SK-N-SH (cell line): ENCODE measurements at regions of chr17 and their contacts with region 1.

Region 1: GRCh38 chr17:27805520-27806146 is 5.3 kb upstream of the NOS2 start:
- DNase-seq: peak; percentile 82
- H3K4me3 ChIP-seq: peak overlapping the region; percentile 3 to 32; a peak in 3 of 4 replicates
- H3K27ac ChIP-seq: no peak overlapping the region
- H3K4me1 ChIP-seq: peaks cover 0 to 9% of the 10 kb centered on the region in 2 experiments; a peak in 1 of 4 replicates
- H3K27me3 ChIP-seq: no peaks in the 10 kb centered on the region
- CTCF ChIP-seq: peak; percentile 78
- EP300 ChIP-seq: no peak
- RAD21 ChIP-seq: peak; percentile 87

Region 2: DNA sequence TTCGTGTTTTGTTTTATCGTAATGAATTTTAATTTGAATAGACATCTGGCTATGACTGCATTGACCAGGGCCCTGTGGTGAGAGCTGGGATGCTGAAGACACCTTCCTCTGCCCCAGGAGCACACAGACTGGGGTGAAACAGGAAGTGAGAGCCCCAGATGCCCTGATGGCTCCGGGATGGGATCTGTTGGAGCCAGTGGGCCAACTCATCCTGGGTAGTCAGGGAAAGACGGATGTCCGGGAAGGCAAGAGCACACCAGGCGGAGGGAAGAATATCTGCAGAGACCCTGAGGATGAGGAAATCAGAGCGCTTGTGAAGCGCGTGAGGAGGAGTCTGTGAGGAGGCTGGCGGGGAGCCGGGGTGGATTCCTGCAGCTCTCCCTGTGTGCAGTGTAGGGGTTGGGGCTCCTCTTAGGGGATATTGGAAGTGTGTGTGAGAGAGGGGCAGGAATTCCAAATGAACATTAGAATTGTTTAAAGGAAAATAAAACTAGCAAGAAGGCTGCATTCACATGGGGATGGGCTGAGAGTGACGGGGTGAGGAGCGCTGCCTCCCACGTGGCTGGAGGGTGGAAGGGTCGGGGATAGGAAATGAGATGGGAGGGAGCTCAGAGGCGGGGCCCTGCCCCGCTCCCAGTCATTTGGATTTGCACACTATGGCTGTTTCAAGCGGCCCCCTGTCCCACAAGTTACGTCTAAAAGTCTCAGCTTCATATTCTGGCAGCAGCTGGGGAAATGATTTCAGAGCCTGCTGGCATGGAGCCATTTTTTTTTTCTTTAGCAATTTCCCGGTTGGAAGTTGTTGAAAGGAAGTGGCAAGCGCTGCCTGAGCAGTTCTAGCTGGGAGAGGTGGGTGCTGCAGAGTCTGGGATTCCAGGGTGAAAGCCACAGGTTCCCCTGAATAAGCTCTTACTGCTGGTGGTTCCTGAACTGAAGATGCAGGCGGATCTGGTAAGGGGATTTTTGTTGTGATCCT is 245.8 kb before region 1 on chr17:
- CTCF ChIA-PET with region 1: no interaction called
- POLR2A ChIA-PET with region 1: no interaction called
- DNase-seq: peak; percentile 58
- H3K4me3 ChIP-seq: 0 out of 4 replicates have a peak overlapping the region, but pooled peaks of 1 of the 2 experiments have one; percentile 1
- H3K27ac ChIP-seq: peak overlapping the region; percentile 56 to 72
- H3K4me1 ChIP-seq: peaks cover 24 to 28% of the 10 kb centered on the region in 2 experiments
- H3K27me3 ChIP-seq: no peaks in the 10 kb centered on the region
- CTCF ChIP-seq: no peak
- EP300 ChIP-seq: peak in 1 of 2 experiments; percentile 45; a peak in 1 of 4 replicates
- RAD21 ChIP-seq: no peak

Region 3: DNA sequence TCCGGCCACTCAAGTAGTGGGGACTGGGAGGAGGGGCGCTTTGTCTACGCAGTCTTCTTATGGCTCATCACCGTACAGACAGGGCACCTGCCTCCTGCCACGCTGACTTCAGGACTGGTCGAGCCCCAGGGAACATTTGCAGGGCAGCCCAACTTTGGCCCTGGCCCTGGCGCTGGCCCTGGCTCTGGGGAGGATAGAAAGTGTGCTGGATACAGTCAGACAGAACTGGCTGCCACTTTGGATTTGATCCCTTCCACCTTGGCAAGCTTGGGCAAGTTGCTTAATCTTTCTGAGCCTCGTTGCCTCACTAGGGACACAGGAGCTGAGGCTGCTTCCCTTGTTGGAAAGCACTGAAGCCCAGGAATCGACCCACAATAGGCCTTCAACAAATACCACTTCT is 161.0 kb before region 1 on chr17:
- CTCF ChIA-PET with region 1: no interaction called
- POLR2A ChIA-PET with region 1: no interaction called
- DNase-seq: no peak
- H3K4me3 ChIP-seq: no peak overlapping the region
- H3K27ac ChIP-seq: no peak overlapping the region
- H3K4me1 ChIP-seq: no peaks in the 10 kb centered on the region
- H3K27me3 ChIP-seq: no peaks in the 10 kb centered on the region
- CTCF ChIP-seq: no peak
- EP300 ChIP-seq: no peak
- RAD21 ChIP-seq: no peak

Region 4: DNA sequence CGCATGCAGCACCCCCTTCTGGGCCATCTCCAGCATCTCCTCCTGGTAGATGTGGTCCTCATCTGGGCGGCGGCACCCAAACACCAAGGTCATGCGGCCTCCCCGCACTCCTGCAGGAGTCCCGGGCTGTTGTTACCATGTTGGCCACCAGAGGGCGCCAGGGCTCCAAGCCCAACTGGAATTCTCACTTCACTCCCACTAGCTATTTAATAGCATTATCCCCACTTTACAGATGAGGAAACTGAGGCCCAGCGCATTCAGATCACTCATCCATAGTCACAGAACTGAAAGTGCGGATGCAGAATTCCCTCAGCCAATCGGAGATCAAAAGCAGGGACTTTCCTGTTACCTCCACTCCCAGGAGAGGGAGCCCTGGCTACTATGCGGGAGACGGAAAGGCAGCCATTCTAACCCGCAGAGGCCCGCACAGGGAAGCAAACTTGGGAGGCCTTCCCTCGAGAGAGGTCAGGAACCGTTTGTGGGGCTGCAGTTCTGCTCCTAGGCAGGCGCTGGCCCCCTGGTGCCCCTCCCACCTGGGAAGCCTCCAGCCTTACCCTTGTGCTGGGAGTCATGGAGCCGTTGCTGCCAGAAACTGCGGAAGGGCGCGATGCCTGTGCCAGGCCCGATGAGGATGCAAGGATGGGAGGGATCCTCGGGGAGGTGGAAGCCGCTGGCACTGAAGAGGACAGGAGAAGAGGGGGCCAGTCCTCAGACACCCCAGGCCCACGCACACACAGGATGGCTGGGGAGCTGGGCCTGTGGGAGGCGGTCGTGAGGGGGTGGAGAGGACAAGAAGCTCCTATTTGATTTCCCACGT is 45.4 kb before region 1 on chr17:
- CTCF ChIA-PET with region 1: interaction called, 13 read pairs
- POLR2A ChIA-PET with region 1: no interaction called
- DNase-seq: peak; percentile 77
- H3K4me3 ChIP-seq: no peak overlapping the region; a peak in 1 of 4 replicates
- H3K27ac ChIP-seq: no peak overlapping the region
- H3K4me1 ChIP-seq: no peaks in the 10 kb centered on the region
- H3K27me3 ChIP-seq: no peaks in the 10 kb centered on the region
- CTCF ChIP-seq: peak; percentile 86
- EP300 ChIP-seq: no peak
- RAD21 ChIP-seq: peak; percentile 65

Region 5: DNA sequence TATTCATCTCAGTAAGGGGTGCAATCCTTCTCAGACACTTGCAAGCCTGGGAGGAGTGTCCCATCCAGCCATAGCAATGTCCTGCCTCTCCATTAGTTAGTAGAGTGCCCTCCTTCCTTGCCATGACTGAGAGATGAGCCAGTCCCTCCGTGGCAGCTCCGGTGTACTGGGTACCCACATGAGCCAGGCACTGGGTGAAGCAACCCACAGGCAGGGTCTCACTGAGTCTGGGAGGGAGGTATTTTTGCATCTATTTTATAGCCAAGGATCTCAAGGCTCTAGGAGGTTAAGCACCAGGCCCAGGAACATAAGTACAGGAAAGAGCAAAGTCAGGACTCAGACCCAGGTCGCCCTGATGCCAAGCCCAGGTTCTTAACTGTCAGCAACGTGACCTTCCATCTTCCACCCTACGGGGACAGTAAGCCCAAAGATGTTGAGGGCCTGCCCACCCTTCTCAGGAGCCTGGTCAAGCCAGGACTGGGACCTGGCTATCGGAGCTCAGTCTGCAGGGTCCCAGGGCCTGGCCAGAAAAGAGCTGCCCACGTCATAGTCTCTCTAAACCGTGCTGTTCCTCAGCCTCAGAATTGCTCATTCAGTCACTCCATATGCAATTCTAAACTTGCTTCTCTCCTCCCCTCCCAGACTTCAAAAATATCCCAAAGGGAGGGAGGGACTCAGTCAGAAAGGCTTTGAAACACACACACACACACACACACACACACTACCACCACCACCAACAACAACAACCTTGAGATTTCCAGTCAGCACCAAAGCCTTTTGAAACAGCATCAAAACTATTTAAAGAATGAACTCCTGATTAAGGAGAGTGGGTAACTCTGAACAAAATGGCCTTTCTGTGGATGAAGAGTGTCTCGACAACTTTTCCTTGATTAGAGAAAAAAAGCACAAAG is 21.9 kb before region 1 on chr17:
- CTCF ChIA-PET with region 1: interaction called, 13 read pairs
- POLR2A ChIA-PET with region 1: no interaction called
- DNase-seq: no peak
- H3K4me3 ChIP-seq: no peak overlapping the region
- H3K27ac ChIP-seq: no peak overlapping the region
- H3K4me1 ChIP-seq: peaks cover 0 to 3% of the 10 kb centered on the region in 2 experiments; a peak in 1 of 4 replicates
- H3K27me3 ChIP-seq: no peaks in the 10 kb centered on the region
- CTCF ChIP-seq: no peak
- EP300 ChIP-seq: no peak
- RAD21 ChIP-seq: no peak

Region 6: GRCh38 chr17:27818401-27819105 is 12.9 kb after region 1 on chr17:
- CTCF ChIA-PET with region 1: interaction called, 13 read pairs
- POLR2A ChIA-PET with region 1: no interaction called
- DNase-seq: no peak
- H3K4me3 ChIP-seq: no peak overlapping the region
- H3K27ac ChIP-seq: no peak overlapping the region
- H3K4me1 ChIP-seq: peaks cover 0 to 2% of the 10 kb centered on the region in 2 experiments; a peak in 1 of 4 replicates
- H3K27me3 ChIP-seq: no peaks in the 10 kb centered on the region
- CTCF ChIP-seq: no peak
- EP300 ChIP-seq: no peak
- RAD21 ChIP-seq: no peak

Region 7: DNA sequence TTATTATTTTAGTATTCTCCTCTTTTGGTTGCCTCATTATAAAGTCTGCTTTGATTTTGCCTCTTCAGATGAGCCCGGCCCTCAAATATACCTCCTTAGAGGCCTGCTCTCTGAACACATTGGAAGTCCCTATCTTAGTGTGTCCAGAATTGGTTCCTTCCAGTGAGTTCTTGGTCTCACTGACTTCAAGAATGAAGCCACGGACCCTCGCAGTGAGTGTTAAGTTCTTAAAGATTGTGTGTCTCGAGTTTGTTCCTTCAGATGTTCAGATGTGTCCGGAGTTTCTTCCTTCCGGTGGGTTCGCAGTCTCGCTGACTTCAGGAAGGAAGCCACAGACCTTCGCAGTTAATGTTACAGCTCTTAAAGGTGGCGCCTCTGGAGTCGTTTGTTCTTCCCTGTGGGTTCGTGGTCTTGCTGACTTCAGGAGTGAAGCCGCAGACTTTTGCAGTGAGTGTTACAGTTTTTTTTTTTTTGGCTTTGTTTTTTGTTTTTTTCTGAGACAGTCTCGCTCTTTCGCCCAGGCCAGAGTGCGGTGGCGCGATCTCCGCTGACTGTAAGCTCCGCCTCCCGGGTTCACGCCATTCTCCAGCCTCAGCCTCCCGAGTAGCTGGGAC is 40.5 kb after region 1 on chr17:
- CTCF ChIA-PET with region 1: interaction called, 19 read pairs
- POLR2A ChIA-PET with region 1: no interaction called
- DNase-seq: no peak
- H3K4me3 ChIP-seq: no peak overlapping the region
- H3K27ac ChIP-seq: no peak overlapping the region
- H3K4me1 ChIP-seq: no peaks in the 10 kb centered on the region
- H3K27me3 ChIP-seq: no peaks in the 10 kb centered on the region; the same call in 1 of the 2 replicates
- CTCF ChIP-seq: no peak
- EP300 ChIP-seq: no peak
- RAD21 ChIP-seq: no peak

Region 8: GRCh38 chr17:27873760-27874159 is 68.1 kb after region 1 on chr17:
- CTCF ChIA-PET with region 1: interaction called, 275 read pairs
- POLR2A ChIA-PET with region 1: no interaction called
- DNase-seq: no peak
- H3K4me3 ChIP-seq: no peak overlapping the region
- H3K27ac ChIP-seq: no peak overlapping the region
- H3K4me1 ChIP-seq: no peaks in the 10 kb centered on the region
- H3K27me3 ChIP-seq: no peaks in the 10 kb centered on the region
- CTCF ChIP-seq: no peak
- EP300 ChIP-seq: no peak
- RAD21 ChIP-seq: no peak

Region 9: GRCh38 chr17:28252436-28252835 is 446.8 kb after region 1 on chr17:
- CTCF ChIA-PET with region 1: interaction called, 30 read pairs
- POLR2A ChIA-PET with region 1: no interaction called
- DNase-seq: no peak
- H3K4me3 ChIP-seq: no peak overlapping the region
- H3K27ac ChIP-seq: no peak overlapping the region
- H3K4me1 ChIP-seq: peaks cover 0 to 3% of the 10 kb centered on the region in 2 experiments; a peak in 1 of 4 replicates
- H3K27me3 ChIP-seq: no peaks in the 10 kb centered on the region
- CTCF ChIP-seq: no peak
- EP300 ChIP-seq: no peak
- RAD21 ChIP-seq: no peak

Region 10: GRCh38 chr17:28306954-28307401 is 501.3 kb after region 1 on chr17:
- CTCF ChIA-PET with region 1: no interaction called
- POLR2A ChIA-PET with region 1: no interaction called
- DNase-seq: no peak
- H3K4me3 ChIP-seq: no peak overlapping the region
- H3K27ac ChIP-seq: no peak overlapping the region
- H3K4me1 ChIP-seq: no peaks in the 10 kb centered on the region
- H3K27me3 ChIP-seq: no peaks in the 10 kb centered on the region
- CTCF ChIP-seq: no peak
- EP300 ChIP-seq: no peak
- RAD21 ChIP-seq: no peak